ENCODE measurements at regions of chr12 and their contacts with region 1.

Region 1: DNA sequence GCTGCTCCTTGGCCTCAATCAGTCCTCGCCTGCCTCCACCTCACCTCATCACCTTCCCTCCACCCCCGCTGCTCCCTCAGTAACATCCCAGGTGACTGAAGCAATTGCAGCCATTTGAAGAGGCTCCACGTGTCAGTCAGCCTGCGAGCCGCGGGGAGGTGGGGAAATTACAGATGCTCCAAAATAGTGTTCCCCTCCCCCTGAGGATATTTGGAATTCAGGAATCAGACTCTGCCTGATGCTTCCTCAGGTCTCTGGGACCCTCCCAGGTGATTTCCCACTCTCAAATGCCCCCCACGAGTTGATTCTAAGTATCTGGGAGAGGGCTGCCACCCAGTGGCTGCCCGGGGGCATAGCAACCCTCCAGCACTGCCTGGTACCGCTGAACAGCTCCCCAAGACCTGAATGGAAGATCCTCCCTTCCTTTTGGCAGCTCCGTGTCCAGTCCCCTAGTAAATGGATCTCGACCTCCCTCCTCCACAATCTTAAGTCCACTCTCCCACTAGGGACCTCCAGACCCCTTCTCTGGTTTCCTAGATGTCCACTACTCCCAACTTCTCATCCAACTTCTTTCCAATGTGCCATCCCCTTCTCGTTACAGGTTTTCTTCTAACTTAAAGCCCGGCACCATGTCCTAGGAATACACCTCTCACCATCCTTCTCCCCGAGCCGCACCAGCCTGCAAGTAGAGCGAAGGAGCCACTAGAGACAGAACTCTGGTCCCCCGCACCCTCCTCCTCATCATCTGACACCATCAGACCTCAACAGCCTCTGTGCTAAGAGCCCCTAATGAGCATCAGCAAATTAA is 1.4 kb upstream of the ASIC1 start:
- DNase-seq: peak; percentile 61
- H3K4me3 Mint-ChIP-seq: peak overlapping the region; percentile 90
- H3K27ac Mint-ChIP-seq: peak overlapping the region; percentile 3
- H3K4me1 Mint-ChIP-seq: peaks cover 18% of the 10 kb centered on the region
- H3K27me3 Mint-ChIP-seq: peaks cover 35% of the 10 kb centered on the region
- CTCF ChIP-seq: peak; percentile 97

Region 2: DNA sequence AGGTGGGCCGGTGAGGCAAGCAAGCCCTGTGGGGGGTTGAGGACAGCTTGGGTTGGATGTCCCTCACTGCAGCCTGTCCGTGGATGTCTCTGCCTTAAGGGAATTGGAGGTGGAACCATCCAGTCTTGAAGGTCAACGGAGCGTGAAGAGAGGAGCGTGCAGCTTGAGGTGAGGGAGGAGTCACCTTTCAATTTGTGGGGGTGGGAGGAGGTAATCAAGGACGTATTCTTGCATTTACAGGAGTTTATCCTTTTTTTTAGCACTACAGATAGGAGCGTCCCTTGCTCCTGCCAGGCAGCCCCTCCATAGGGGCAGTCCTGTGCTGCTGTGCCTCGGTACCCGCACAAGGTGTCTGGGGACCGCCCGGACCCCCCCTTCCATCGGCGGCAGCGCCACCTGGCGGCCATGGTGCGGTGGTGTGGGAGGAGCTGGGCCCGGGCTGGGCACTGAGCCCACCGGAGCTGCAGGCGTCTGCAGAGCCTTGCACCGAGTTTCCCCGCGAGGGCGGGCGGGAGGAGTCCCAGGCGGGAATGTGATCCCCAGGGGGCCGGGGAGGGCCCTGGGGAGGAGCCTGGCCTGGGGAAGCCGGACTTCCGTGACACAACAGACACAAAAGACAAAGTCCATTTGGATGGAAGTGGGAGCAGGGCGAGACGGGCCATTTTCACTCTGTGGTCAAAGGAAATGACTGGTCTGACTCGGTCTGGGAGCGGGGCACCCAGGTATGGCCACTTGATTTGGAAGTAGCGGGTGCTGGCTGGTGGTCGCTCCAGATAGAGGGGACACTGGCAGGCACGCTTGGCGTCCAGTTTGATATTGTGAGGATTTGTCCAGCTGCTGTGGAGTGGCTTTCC is 708.4 kb before region 1 on chr12:
- CTCF ChIA-PET with region 1: no interaction called
- POLR2A ChIA-PET with region 1: no interaction called
- intact Hi-C with region 1: no loop called
- DNase-seq: peak; percentile 87
- H3K4me3 Mint-ChIP-seq: peak overlapping the region; percentile 68
- H3K27ac Mint-ChIP-seq: no peak overlapping the region
- H3K4me1 Mint-ChIP-seq: peaks cover 9% of the 10 kb centered on the region
- H3K27me3 Mint-ChIP-seq: peaks cover 29% of the 10 kb centered on the region
- CTCF ChIP-seq: peak; percentile 95

Region 3: DNA sequence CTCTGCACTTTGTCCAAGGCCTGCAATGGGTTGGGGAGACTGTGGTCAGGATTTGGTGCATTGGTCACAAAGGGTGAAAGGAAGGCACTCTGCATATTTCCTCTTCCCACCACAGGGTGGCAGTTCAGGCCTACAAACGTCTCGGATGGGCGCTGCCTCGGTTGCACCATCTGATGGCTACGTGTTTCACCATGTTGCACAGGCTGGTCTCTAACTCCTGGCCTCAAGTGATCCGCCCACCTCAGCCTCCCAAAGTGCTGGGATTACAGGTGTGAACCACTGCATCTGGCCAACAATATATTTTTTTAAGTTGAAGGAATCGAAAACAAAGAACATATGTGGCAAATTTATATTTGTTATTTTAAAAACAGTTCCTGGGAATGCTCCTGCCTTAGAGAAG is 279.6 kb before region 1 on chr12:
- CTCF ChIA-PET with region 1: no interaction called
- POLR2A ChIA-PET with region 1: no interaction called
- intact Hi-C with region 1: loop called (anchors 5 kb)
- DNase-seq: peak; percentile 82
- H3K4me3 Mint-ChIP-seq: no peak overlapping the region
- H3K27ac Mint-ChIP-seq: peak overlapping the region; percentile 42
- H3K4me1 Mint-ChIP-seq: peaks cover 17% of the 10 kb centered on the region
- H3K27me3 Mint-ChIP-seq: peaks cover 20% of the 10 kb centered on the region
- CTCF ChIP-seq: peak; percentile 92

Region 4: DNA sequence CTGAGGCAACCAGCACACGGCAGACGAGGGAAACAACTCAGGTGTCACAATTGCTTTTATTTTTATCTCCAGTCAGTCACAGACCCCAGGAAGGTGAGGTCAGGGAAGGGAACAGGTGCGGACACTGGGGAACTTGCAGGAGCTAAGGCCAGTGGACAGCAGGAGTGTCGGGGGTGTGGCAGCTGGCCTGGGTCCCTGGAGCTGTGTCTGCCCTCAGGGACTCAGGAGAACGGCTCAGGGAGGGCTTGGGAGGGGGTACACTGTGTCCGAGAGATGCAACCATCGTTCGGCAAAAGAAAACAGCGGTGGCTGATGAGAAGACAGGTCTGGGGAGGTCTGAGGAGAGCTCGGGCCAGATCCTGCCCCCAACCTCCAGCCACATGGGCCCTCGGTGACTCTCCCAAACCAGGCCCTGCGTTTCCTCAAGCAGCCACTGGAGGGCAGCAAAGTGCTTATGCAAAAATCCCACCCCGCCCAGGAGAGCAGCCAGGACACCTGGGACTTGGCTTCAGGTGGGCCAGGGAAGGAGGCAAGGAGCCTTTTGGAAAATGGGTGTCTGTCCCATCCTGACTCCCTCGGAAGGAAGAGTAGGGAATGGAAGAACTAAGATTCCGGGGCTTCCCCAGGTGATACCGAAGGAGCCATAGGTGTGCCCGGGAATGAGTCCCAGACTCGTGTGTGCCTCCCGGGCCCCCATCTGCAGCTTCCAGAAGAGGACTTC is 189.0 kb before region 1 on chr12:
- CTCF ChIA-PET with region 1: interaction called, 34 read pairs
- POLR2A ChIA-PET with region 1: interaction called, 3 read pairs
- intact Hi-C with region 1: loop called (anchors 1 kb)
- DNase-seq: peak; percentile 77
- H3K4me3 Mint-ChIP-seq: no peak overlapping the region
- H3K27ac Mint-ChIP-seq: no peak overlapping the region
- H3K4me1 Mint-ChIP-seq: peaks cover 10% of the 10 kb centered on the region
- H3K27me3 Mint-ChIP-seq: peaks cover 14% of the 10 kb centered on the region
- CTCF ChIP-seq: peak; percentile 95

Region 5: GRCh38 chr12:50025187-50026059 is 30.6 kb before region 1 on chr12 and contains the start of gene RACGAP1:
- CTCF ChIA-PET with region 1: interaction called, 11 read pairs
- POLR2A ChIA-PET with region 1: interaction called, 3 read pairs
- intact Hi-C with region 1: no loop called
- DNase-seq: peak; percentile 99
- H3K4me3 Mint-ChIP-seq: peak within 1 kb of the TSS; percentile 98
- H3K27ac Mint-ChIP-seq: peak within 1 kb of the TSS; percentile 96
- H3K4me1 Mint-ChIP-seq: peaks cover 33% of the 10 kb centered on the region
- H3K27me3 Mint-ChIP-seq: no peaks in the 10 kb centered on the region
- CTCF ChIP-seq: no peak
- total RNA-seq, gene RACGAP1: 58.5 and 67.9 TPM in 2 replicates

Region 6: DNA sequence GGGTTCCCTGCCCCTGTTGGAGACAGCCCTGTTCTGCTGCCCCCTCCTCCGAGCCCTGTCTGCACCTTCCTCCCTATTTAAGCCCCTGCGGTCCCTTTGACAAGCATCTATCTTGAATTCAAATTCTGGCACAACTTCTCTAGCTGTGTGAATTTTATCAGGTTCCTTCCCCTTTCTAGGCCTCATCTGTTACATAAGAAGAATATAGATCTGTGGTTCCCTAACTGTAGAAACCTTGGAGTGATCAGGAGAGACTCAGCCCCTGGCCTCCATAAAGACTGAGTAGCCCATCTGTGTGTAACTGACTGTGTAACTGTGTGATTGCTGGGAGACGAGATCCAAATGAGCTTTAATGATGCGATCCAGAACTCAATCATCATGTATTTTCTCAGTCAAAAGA is 17.7 kb before region 1 on chr12:
- CTCF ChIA-PET with region 1: interaction called, 58 read pairs
- POLR2A ChIA-PET with region 1: interaction called, 7 read pairs
- intact Hi-C with region 1: no loop called
- DNase-seq: no peak
- H3K4me3 Mint-ChIP-seq: no peak overlapping the region
- H3K27ac Mint-ChIP-seq: no peak overlapping the region
- H3K4me1 Mint-ChIP-seq: peaks cover 7% of the 10 kb centered on the region
- H3K27me3 Mint-ChIP-seq: no peaks in the 10 kb centered on the region
- CTCF ChIP-seq: no peak

Region 7: GRCh38 chr12:50043854-50044253 is 12.2 kb before region 1 on chr12:
- CTCF ChIA-PET with region 1: interaction called, 58 read pairs
- POLR2A ChIA-PET with region 1: interaction called, 7 read pairs
- intact Hi-C with region 1: no loop called
- DNase-seq: no peak
- H3K4me3 Mint-ChIP-seq: no peak overlapping the region
- H3K27ac Mint-ChIP-seq: no peak overlapping the region
- H3K4me1 Mint-ChIP-seq: peaks cover 7% of the 10 kb centered on the region
- H3K27me3 Mint-ChIP-seq: no peaks in the 10 kb centered on the region
- CTCF ChIP-seq: no peak

Region 8: DNA sequence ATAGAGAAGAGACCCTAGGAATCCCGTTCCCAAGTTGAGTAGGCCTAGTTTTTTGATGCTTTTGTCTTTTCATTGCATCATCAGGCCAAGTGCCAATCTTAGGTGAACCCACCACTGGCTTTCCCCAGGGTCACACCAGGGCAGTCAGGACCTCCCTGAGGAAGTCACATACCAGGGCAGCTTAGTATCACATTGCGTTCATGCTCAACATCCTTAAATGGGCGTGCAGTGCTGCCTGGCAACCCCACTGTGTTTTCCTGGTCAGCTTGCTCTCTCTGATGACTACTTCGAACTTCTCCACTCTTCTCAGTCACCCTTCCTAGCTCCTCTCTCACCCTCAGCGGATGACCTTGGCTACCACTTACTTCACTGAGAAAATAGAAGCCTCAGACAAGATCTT is 10.4 kb after region 1 on chr12:
- CTCF ChIA-PET with region 1: interaction called, 26 read pairs
- POLR2A ChIA-PET with region 1: interaction called, 4 read pairs
- intact Hi-C with region 1: no loop called
- DNase-seq: no peak
- H3K4me3 Mint-ChIP-seq: no peak overlapping the region
- H3K27ac Mint-ChIP-seq: no peak overlapping the region
- H3K4me1 Mint-ChIP-seq: peaks cover 14% of the 10 kb centered on the region
- H3K27me3 Mint-ChIP-seq: no peaks in the 10 kb centered on the region
- CTCF ChIP-seq: no peak

Region 9: GRCh38 chr12:50297027-50297426 is 241.0 kb after region 1 on chr12:
- CTCF ChIA-PET with region 1: no interaction called
- POLR2A ChIA-PET with region 1: no interaction called
- intact Hi-C with region 1: no loop called
- DNase-seq: no peak
- H3K4me3 Mint-ChIP-seq: no peak overlapping the region
- H3K27ac Mint-ChIP-seq: no peak overlapping the region
- H3K4me1 Mint-ChIP-seq: no peaks in the 10 kb centered on the region
- H3K27me3 Mint-ChIP-seq: no peaks in the 10 kb centered on the region
- CTCF ChIP-seq: no peak

Region 10: GRCh38 chr12:50326636-50327284 is 270.7 kb after region 1 on chr12:
- CTCF ChIA-PET with region 1: no interaction called
- POLR2A ChIA-PET with region 1: no interaction called
- intact Hi-C with region 1: no loop called
- DNase-seq: peak; percentile 90
- H3K4me3 Mint-ChIP-seq: peak overlapping the region; percentile 51
- H3K27ac Mint-ChIP-seq: peak overlapping the region; percentile 51
- H3K4me1 Mint-ChIP-seq: peaks cover 17% of the 10 kb centered on the region
- H3K27me3 Mint-ChIP-seq: no peaks in the 10 kb centered on the region
- CTCF ChIP-seq: no peak

Measured in MCF 10A (cell line).